SK-N-SH (cell line): ENCODE measurements at regions of chr12 and their contacts with region 1.

Region 1: DNA sequence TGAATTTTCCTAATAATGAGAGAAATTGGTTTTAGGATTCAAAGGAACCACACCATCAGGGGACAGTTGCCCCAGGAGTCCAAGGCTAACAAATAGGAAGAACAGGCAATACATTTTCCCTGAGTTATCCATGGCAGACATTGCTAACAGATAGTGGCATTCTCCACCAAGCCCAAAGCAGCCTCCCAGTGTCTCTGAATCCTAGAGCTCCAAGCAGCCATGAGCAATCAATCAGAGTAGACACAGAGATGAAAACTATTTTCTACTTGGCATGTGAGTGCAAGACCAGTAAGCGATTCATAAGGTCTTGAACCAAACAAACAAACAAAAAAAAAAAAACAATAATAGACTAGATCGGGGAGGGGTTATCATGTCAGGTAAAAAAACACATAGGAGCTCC is 515.7 kb downstream of the MED13L start:
- DNase-seq: no peak
- H3K4me3 ChIP-seq: no peak overlapping the region
- H3K27ac ChIP-seq: no peak overlapping the region; a peak in 1 of 4 replicates
- H3K4me1 ChIP-seq: peaks cover 0 to 3% of the 10 kb centered on the region in 2 experiments; a peak in 1 of 4 replicates
- H3K27me3 ChIP-seq: no peaks in the 10 kb centered on the region
- CTCF ChIP-seq: no peak
- EP300 ChIP-seq: no peak
- RAD21 ChIP-seq: no peak

Region 2: GRCh38 chr12:114668151-114668885 is 1093.5 kb before region 1 on chr12:
- CTCF ChIA-PET with region 1: interaction called, 119 read pairs
- POLR2A ChIA-PET with region 1: interaction called, 4 read pairs
- DNase-seq: peak; percentile 92
- H3K4me3 ChIP-seq: peak overlapping the region; percentile 59 to 77
- H3K27ac ChIP-seq: peak overlapping the region in 1 of 2 experiments; percentile 89; a peak in 3 of 4 replicates
- H3K4me1 ChIP-seq: peaks cover 0 to 27% of the 10 kb centered on the region in 2 experiments; a peak in 2 of 4 replicates
- H3K27me3 ChIP-seq: no peaks in the 10 kb centered on the region
- CTCF ChIP-seq: peak; percentile 62
- EP300 ChIP-seq: no peak
- RAD21 ChIP-seq: peak; percentile 86